ENCODE measurements at regions of chr1 and their contacts with region 1.

Region 1: GRCh38 chr1:185129708-185130107 is 27.0 kb downstream of the TRMT1L start:
- DNase-seq: no peak
- H3K4me3 ChIP-seq: no peak overlapping the region
- H3K27ac ChIP-seq: no peak overlapping the region
- H3K4me1 ChIP-seq: no peaks in the 10 kb centered on the region
- H3K27me3 ChIP-seq: no peaks in the 10 kb centered on the region
- CTCF ChIP-seq: no peak

Region 2: DNA sequence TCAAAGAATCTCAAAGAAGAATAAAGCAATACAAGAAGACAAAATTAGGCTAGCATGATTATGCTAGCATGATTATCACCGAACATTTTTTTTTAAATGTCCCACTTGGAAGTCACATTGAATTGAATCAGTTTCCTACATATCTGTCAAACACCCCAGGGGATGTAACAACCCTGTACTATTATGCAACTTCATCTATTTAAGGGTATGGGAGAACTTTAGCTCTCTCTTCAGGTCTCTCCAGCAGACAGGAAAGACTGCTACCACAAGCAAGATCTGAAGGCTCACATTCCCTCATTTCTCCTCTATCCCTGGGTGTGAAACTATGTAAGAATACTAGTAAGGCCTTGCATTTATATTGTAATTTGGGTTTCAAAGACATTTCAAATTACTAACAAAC is 427.9 kb before region 1 on chr1:
- intact Hi-C with region 1: loop called (anchors 10 kb)
- DNase-seq: no peak
- H3K4me3 ChIP-seq: no peak overlapping the region
- H3K27ac ChIP-seq: no peak overlapping the region
- H3K4me1 ChIP-seq: no peaks in the 10 kb centered on the region
- H3K27me3 ChIP-seq: no peaks in the 10 kb centered on the region
- CTCF ChIP-seq: no peak